Breast epithelium (tissue), 4 donors: ENCODE measurements at regions of chr4 and their contacts with region 1.

Region 1: GRCh38 chr4:17092736-17093437 is 194.4 kb upstream of the LDB2 start:
- DNase-seq: no peak
- H3K4me3 ChIP-seq: no peak overlapping the region
- H3K27ac ChIP-seq: no peak overlapping the region
- H3K4me1 ChIP-seq: no peaks in the 10 kb centered on the region
- H3K27me3 ChIP-seq: no peaks in the 10 kb centered on the region
- CTCF ChIP-seq: no peak
- POLR2A ChIP-seq: no peak

Region 2: GRCh38 chr4:16329125-16329796 is 763.6 kb before region 1 on chr4:
- intact Hi-C with region 1: no loop called
- DNase-seq: no peak
- H3K4me3 ChIP-seq: no peak overlapping the region
- H3K27ac ChIP-seq: no peak overlapping the region
- H3K4me1 ChIP-seq: no peaks in the 10 kb centered on the region
- H3K27me3 ChIP-seq: no peaks in the 10 kb centered on the region
- CTCF ChIP-seq: no peak
- POLR2A ChIP-seq: no peak

Region 3: DNA sequence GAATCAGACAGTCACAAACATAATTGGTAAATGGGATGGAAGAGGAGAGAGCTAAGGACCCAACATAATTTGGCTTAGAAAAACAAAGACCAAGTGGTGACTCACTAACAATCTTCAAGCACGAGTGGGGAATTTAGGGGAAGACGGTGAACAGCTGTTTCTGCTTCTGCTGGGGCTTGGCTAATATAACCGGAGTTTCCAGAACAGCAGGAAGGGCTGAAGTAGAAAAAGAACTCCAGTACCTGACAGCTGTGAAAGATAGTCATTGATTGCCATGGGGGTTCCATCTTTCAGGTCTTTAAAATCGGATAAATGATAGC is 96.5 kb after region 1 on chr4:
- intact Hi-C with region 1: loop called (anchors 2 kb)
- DNase-seq: no peak
- H3K4me3 ChIP-seq: no peak overlapping the region
- H3K27ac ChIP-seq: peak overlapping the region; percentile 24 to 72
- H3K4me1 ChIP-seq: no peaks in the 10 kb centered on the region
- H3K27me3 ChIP-seq: no peaks in the 10 kb centered on the region
- CTCF ChIP-seq: no peak
- POLR2A ChIP-seq: no peak